ENCODE measurements at regions of chr7 and their contacts with region 1.

Region 1: GRCh38 chr7:83684894-83685293 is 36.0 kb upstream of the SEMA3E start:
- DNase-seq: peak; percentile 72
- H3K4me3 ChIP-seq: no peak overlapping the region
- H3K4me3 Mint-ChIP-seq: peak overlapping the region; percentile 16
- H3K27ac Mint-ChIP-seq: peak overlapping the region; percentile 86
- H3K4me1 ChIP-seq: peaks cover 18% of the 10 kb centered on the region
- H3K4me1 Mint-ChIP-seq: peaks cover 31% of the 10 kb centered on the region
- H3K27me3 ChIP-seq: no peaks in the 10 kb centered on the region
- H3K27me3 Mint-ChIP-seq: no peaks in the 10 kb centered on the region
- CTCF ChIP-seq: no peak

Region 2: GRCh38 chr7:83388436-83388835 is 296.5 kb before region 1 on chr7:
- CTCF ChIA-PET with region 1: no interaction called
- POLR2A ChIA-PET with region 1: no interaction called
- intact Hi-C with region 1: no loop called
- DNase-seq: no peak
- H3K4me3 ChIP-seq: no peak overlapping the region
- H3K4me3 Mint-ChIP-seq: no peak overlapping the region
- H3K27ac Mint-ChIP-seq: no peak overlapping the region
- H3K4me1 ChIP-seq: no peaks in the 10 kb centered on the region
- H3K4me1 Mint-ChIP-seq: no peaks in the 10 kb centered on the region
- H3K27me3 ChIP-seq: no peaks in the 10 kb centered on the region
- H3K27me3 Mint-ChIP-seq: no peaks in the 10 kb centered on the region
- CTCF ChIP-seq: no peak

Region 3: DNA sequence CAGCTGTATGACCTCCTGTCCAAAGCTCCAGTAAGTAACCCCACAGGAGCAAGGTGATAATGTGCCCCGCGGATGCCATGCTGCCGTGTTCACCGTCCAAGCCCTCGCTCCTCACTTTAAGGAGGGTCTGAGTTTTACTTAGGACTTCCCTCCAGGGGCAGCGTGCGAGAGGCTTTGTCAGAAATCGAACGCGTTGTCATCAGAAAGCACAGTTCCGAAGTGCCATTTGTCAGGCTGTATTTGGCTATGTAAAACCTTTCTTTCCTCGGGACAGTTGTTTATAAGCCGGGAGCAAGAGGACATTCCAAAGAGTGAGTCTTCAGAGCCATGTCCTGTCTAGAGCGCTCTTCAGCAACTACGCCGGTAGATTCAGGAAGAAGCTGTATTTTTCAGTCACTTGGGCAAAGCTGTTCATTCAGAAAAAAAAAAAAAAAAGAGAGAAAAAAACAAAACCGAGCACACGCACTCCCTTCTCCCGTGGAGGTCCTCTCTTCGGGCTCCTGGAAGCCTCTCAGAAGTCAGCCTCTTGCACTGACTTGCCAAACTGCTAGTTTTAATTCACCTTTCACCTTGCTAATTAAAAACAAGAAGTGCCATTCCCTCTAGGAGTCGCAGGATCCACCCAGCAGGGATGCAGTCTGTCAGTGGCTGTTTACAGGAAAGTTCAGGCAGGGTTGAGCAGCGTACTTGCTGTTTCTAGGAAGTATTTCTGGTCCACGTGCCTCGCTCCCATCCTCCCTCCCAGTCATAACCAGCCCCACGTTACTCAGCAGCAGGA is 36.2 kb before region 1 on chr7 and contains the start of gene SEMA3E:
- CTCF ChIA-PET with region 1: no interaction called
- POLR2A ChIA-PET with region 1: no interaction called
- intact Hi-C with region 1: no loop called
- DNase-seq: peak in 1 of 2 experiments; percentile 8
- H3K4me3 ChIP-seq: peak within 1 kb of the TSS; percentile 24
- H3K4me3 Mint-ChIP-seq: peak within 1 kb of the TSS; percentile 64
- H3K27ac Mint-ChIP-seq: no peak within 1 kb of the TSS
- H3K4me1 ChIP-seq: no peaks in the 10 kb centered on the region
- H3K4me1 Mint-ChIP-seq: no peaks in the 10 kb centered on the region
- H3K27me3 ChIP-seq: no peaks in the 10 kb centered on the region
- H3K27me3 Mint-ChIP-seq: peaks cover 16% of the 10 kb centered on the region
- CTCF ChIP-seq: peak in 1 of 2 experiments; percentile 11
- total RNA-seq, gene SEMA3E: 0.20 TPM in 1 of 2 replicates, not detected in the other

Region 4: DNA sequence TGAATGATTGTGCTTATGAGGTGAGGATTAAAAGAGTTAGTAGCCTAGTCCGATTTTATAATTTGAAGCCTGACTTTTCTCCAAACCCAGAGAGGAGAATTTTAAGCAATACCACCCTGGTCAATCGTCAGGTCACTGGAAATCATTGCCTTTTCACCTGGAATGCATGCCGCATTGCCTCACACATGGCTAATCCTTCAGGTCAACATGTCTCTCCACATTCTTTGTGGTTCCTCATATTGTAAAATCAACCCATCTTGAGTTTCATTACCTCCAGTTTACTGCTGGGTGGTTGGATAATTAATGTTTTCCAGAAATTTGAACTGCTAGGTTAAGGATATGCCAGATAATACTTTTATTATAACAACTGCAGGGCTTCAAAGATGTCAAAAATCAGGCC is 19.7 kb after region 1 on chr7:
- CTCF ChIA-PET with region 1: no interaction called
- POLR2A ChIA-PET with region 1: no interaction called
- intact Hi-C with region 1: loop called (anchors 1 kb)
- DNase-seq: peak; percentile 52 to 53
- H3K4me3 ChIP-seq: no peak overlapping the region
- H3K4me3 Mint-ChIP-seq: no peak overlapping the region
- H3K27ac Mint-ChIP-seq: no peak overlapping the region
- H3K4me1 ChIP-seq: peaks cover 10% of the 10 kb centered on the region
- H3K4me1 Mint-ChIP-seq: no peaks in the 10 kb centered on the region
- H3K27me3 ChIP-seq: no peaks in the 10 kb centered on the region
- H3K27me3 Mint-ChIP-seq: no peaks in the 10 kb centered on the region
- CTCF ChIP-seq: no peak